Astrocyte of the cerebellum (primary cell): ENCODE measurements at regions of chr4 and their contacts with region 1.

Region 1: DNA sequence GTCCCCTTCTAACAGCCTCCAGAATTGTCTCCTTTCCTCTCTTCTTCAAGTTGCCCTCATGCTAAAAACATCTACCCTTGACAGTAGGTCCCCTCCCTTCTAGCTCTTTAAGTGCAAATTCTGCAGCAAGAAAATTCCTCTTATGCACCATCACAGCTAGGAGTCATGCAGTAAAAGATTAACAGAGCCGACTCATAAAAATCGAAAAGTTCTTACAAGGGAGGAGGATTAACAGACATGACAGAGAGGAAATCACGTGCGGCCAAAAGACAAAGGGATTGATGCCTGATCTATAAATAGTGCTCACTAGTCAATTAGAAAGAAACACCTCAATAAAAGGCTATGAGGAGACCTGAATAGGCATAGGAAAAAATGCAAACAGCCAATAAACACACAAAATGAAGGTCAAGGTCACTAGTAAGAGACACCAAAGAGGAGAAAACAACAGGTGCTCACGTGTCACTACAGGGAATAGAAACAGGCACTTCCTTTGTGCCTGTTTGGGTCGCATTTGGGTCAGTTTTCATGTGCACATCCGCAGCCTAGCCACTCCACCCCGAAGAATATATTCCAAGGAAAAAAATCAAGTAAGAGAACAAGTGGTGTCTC is 3.4 kb downstream of the RNF212 start:
- DNase-seq: no peak
- H3K4me3 ChIP-seq: no peak overlapping the region
- CTCF ChIP-seq: no peak

Region 2: GRCh38 chr4:1021386-1022050 is 88.5 kb before region 1 on chr4:
- in situ Hi-C with region 1: no loop called
- DNase-seq: no peak
- H3K4me3 ChIP-seq: no peak overlapping the region
- CTCF ChIP-seq: no peak

Region 3: GRCh38 chr4:1055721-1056590 is 54.0 kb before region 1 on chr4:
- in situ Hi-C with region 1: loop called (anchors 10 kb)
- DNase-seq: no peak
- H3K4me3 ChIP-seq: no peak overlapping the region
- CTCF ChIP-seq: no peak

Region 4: DNA sequence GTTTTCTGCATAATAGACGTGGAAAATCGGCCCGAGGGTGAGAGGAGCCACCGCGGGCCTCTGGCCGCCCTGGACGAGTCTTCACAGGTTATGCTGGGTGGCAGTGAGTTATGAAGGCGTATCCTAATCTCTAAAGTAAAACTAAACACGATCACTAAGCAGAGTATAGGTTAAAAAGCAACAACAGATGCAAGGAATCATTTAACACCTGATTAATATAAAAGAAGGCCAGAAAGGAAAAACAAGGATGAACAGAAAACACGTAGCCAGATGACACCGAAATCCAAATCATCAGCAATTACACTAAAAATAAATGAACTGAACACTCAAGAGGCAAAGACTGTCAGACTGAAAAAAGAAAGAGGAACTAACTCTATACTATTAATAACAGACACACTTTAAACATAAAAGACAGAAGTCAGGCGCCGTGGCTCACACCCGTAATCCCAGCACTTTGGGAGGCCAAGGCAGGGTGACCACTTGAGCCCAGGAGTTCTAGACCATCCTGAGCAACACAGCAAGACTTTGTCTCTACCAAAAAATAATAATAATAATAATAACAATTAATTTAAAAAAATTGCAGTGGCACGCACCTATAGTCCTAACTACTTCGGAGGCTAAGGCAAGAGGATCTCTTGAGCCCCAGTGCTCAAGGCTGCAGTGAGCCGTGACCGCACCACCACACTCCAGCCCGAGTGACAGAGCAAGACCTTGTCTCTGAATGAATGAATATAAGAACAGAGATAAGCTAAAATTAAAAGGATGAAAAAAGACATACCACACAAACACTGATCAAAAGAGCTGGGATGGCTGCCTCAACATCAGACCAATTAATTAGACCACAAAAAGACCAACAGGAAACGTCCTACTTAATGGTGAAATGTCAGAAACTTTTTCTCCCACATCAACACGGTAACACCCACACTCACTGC is 108.9 kb after region 1 on chr4:
- in situ Hi-C with region 1: no loop called
- DNase-seq: no peak
- H3K4me3 ChIP-seq: no peak overlapping the region
- CTCF ChIP-seq: no peak

Region 5: DNA sequence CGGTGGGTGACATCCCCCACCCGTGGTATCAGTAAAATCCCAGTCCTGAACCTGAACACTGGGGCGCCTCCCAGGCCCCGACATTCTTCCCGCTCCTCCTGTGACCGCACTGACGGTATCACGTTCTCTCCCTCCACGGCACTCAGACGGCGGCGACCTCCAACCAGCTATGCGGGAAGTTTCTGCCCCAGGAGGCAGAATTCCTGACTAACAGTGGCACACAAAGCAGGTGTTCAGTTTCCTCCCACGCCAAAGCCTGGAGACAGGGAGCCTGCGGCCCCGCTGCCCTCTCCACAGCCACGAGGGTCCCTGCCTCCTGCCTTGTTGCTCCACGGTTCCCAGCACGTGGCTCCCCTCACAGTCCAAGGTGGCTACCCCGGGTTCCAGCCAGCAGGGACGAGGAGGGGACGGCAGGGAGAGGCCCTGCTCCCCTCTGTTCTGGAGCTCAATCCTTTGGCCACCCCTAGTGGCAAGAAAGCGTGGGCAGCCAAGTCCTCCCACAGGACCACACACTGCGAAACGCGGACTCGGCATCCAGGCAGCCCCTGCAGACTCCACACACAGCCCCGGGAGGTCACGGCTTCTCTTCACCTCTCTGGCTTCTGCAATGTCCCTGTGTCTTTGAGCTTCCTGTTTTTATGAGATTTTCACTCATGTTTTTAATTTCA is 123.8 kb after region 1 on chr4:
- in situ Hi-C with region 1: no loop called
- DNase-seq: no peak
- H3K4me3 ChIP-seq: no peak overlapping the region
- CTCF ChIP-seq: peak; percentile 65